ENCODE measurements at regions of chr16 and their contacts with region 1.

Region 1: DNA sequence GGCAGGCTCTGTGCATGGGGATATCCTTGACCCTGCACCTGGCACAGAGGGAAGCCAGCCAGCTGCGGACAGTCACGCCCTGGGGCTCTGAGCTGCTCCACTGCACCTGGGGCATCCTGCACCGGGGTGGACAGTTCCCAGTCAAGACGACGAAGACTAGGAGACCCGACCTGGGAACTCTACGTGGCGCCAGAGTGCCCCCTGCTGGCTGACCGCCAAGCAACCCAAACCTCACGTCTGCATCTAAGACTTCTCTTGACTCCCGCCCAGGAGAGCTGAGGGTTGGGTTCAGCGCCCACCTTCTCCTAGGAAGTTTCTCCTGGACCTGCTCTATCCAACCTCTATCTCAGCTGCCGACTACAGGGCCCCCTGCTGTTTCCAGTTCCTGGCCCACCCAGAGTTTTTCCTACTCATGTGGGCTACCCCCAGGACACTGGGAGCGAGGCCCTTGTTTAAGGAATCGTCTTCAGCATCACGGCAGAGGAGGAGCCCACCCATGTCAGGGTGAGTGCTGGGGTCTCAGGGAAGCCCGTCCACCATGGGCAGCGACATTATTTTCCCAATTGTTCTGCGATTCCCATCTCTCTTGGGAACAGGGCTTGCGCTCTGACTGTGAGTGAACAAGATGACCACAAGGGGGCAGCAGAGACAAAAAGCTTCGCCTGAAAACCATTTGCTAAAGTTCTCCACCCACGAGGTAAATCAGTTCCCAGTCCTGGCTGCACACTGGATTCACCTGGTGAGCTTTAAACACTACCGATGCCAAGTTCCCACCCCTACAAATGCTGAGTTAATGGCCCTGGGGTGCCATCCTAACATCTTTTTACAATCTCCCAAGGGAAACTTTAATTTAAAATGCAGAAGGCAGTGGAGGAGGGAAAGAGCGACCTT is 29.3 kb downstream of the TLE7 start:
- DNase-seq: peak in 1 of 2 donors; percentile 28
- H3K4me3 ChIP-seq: no peak overlapping the region
- H3K27ac ChIP-seq: no peak overlapping the region
- H3K4me1 ChIP-seq: peaks cover 0 to 3% (median 0%) of the 10 kb centered on the region in 4 donors
- H3K27me3 ChIP-seq: peaks cover 0 to 36% of the 10 kb centered on the region in 2 donors
- CTCF ChIP-seq: peak; percentile 82 to 83

Region 2: GRCh38 chr16:71396594-71396993 is 15.9 kb before region 1 on chr16:
- intact Hi-C with region 1: no loop called
- DNase-seq: no peak
- H3K4me3 ChIP-seq: no peak overlapping the region
- H3K27ac ChIP-seq: no peak overlapping the region
- H3K4me1 ChIP-seq: no peaks in the 10 kb centered on the region
- H3K27me3 ChIP-seq: peaks cover 0 to 10% of the 10 kb centered on the region in 2 donors
- CTCF ChIP-seq: no peak

Region 3: DNA sequence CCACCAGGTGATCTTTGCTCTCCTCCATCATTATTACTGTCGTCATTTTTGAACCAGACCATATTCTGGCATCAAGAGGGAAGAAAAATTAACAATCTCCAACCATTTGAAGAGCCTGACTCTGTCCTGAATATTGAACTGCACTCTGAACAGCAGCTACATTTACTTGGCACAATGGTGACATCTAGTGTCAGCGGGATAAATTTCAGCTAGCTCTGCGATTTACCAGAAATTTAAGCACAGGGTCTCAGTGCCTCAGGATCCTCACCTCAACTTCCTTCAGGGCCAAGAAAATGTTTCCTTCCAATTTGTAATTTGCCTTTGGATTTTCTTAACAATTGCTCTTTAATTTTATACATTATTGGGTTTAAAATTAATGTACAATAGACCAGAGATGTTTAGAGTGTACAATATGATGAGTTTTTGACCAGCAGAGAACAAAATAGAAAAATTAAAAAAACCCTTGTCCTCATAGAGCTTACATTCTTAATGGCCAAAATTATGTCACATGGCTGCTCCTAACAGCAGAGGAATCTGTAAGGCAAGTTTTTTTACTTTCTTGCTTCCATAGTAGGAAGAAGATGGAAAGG is 87.4 kb after region 1 on chr16:
- intact Hi-C with region 1: loop called (anchors 2 kb)
- DNase-seq: no peak
- H3K4me3 ChIP-seq: no peak overlapping the region
- H3K27ac ChIP-seq: no peak overlapping the region
- H3K4me1 ChIP-seq: no peaks in the 10 kb centered on the region
- H3K27me3 ChIP-seq: peaks cover 0 to 16% of the 10 kb centered on the region in 2 donors
- CTCF ChIP-seq: peak; percentile 64 to 65

Region 4: GRCh38 chr16:71609066-71609465 is 196.6 kb after region 1 on chr16:
- intact Hi-C with region 1: loop called (anchors 5 kb)
- DNase-seq: no peak
- H3K4me3 ChIP-seq: no peak overlapping the region
- H3K27ac ChIP-seq: no peak overlapping the region
- H3K4me1 ChIP-seq: peaks cover 0 to 5% (median 0%) of the 10 kb centered on the region in 4 donors
- H3K27me3 ChIP-seq: peaks cover 0 to 12% of the 10 kb centered on the region in 2 donors
- CTCF ChIP-seq: no peak

Region 5: GRCh38 chr16:71726476-71727315 is 314.2 kb after region 1 on chr16:
- intact Hi-C with region 1: no loop called
- DNase-seq: no peak
- H3K4me3 ChIP-seq: no peak overlapping the region
- H3K27ac ChIP-seq: peak overlapping the region; percentile 49 to 59
- H3K4me1 ChIP-seq: peaks cover 0 to 35% (median 16%) of the 10 kb centered on the region in 4 donors
- H3K27me3 ChIP-seq: no peaks in the 10 kb centered on the region
- CTCF ChIP-seq: no peak

Region 6: GRCh38 chr16:71937868-71938510 is 525.5 kb after region 1 on chr16:
- intact Hi-C with region 1: no loop called
- DNase-seq: no peak
- H3K4me3 ChIP-seq: no peak overlapping the region
- H3K27ac ChIP-seq: no peak overlapping the region
- H3K4me1 ChIP-seq: peaks cover 0 to 3% (median 0%) of the 10 kb centered on the region in 4 donors
- H3K27me3 ChIP-seq: no peaks in the 10 kb centered on the region
- CTCF ChIP-seq: no peak

Measured in tibial artery (tissue), 4 donors.